Caco-2 (cell line): ENCODE measurements at regions of chr1 and their contacts with region 1.

Region 1: GRCh38 chr1:234963180-234963903 is 165.3 kb downstream of the TOMM20 start:
- DNase-seq: peak; percentile 85 to 88
- H3K4me3 ChIP-seq: peak overlapping the region; percentile 6; the same call in 1 of the 2 replicates
- H3K4me3 Mint-ChIP-seq: peak overlapping the region; percentile 78
- H3K27ac Mint-ChIP-seq: peak overlapping the region; percentile 89
- H3K4me1 ChIP-seq: peaks cover 66% of the 10 kb centered on the region
- H3K4me1 Mint-ChIP-seq: peaks cover 76% of the 10 kb centered on the region
- H3K27me3 ChIP-seq: no peaks in the 10 kb centered on the region
- H3K27me3 Mint-ChIP-seq: no peaks in the 10 kb centered on the region
- CTCF ChIP-seq: no peak

Region 2: GRCh38 chr1:234499119-234499942 is 464.0 kb before region 1 on chr1:
- CTCF ChIA-PET with region 1: no interaction called
- POLR2A ChIA-PET with region 1: no interaction called
- intact Hi-C with region 1: loop called (anchors 1 kb)
- DNase-seq: peak; percentile 81 to 91
- H3K4me3 ChIP-seq: no peak overlapping the region
- H3K4me3 Mint-ChIP-seq: no peak overlapping the region
- H3K27ac Mint-ChIP-seq: peak overlapping the region; percentile 96
- H3K4me1 ChIP-seq: peaks cover 11% of the 10 kb centered on the region
- H3K4me1 Mint-ChIP-seq: peaks cover 18% of the 10 kb centered on the region
- H3K27me3 ChIP-seq: no peaks in the 10 kb centered on the region
- H3K27me3 Mint-ChIP-seq: no peaks in the 10 kb centered on the region
- CTCF ChIP-seq: peak; percentile 96

Region 3: GRCh38 chr1:234722904-234723720 is 240.2 kb before region 1 on chr1:
- CTCF ChIA-PET with region 1: interaction called, 3 read pairs
- POLR2A ChIA-PET with region 1: interaction called, 12 read pairs
- intact Hi-C with region 1: loop called (anchors 1 kb)
- DNase-seq: no peak
- H3K4me3 ChIP-seq: no peak overlapping the region
- H3K4me3 Mint-ChIP-seq: peak overlapping the region; percentile 64
- H3K27ac Mint-ChIP-seq: peak overlapping the region; percentile 86
- H3K4me1 ChIP-seq: peaks cover 93% of the 10 kb centered on the region
- H3K4me1 Mint-ChIP-seq: peaks cover 69% of the 10 kb centered on the region
- H3K27me3 ChIP-seq: no peaks in the 10 kb centered on the region
- H3K27me3 Mint-ChIP-seq: no peaks in the 10 kb centered on the region
- CTCF ChIP-seq: no peak

Region 4: DNA sequence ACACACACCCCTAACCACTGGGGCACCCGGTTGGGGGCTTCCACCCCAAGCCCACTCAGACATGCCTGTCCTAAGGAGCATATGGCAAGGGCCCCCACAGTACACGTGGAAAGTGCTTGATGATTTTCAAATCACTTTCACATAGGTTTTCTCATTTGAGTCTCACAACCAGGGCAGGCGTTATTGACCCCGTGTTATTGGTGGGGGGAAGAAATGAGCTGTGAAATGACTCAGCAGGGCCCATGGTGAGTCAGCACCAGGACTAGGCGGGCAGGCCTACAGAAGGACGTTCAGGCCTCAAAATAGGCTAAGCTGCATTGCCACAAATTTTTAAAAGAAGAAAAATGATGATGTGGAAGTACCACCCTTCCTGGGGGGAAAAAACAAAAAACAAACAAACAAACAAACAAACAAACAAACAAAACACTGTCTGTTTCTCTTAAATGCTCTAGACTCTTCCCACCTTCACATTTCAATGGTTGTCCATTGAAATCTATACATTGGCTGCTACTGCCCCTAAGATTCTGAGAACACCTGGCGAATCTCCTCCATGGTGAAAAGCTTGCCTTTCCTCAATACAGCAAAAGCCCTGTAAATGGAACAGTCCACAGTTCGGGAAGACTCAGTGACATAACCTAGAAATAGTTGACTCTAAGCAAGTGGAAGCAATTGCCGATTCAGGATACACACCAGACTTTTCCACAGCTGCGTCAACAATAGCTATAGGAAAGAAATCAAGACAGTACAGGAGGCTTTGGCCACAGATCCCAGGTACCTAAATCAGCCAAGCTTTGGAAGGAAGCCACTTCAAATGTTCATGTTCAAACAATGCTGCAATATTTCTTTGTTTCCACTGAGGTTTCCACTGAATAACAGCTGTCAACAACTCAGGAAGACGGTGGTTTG is 69.4 kb before region 1 on chr1:
- CTCF ChIA-PET with region 1: no interaction called
- POLR2A ChIA-PET with region 1: no interaction called
- intact Hi-C with region 1: loop called (anchors 5 kb)
- DNase-seq: no peak
- H3K4me3 ChIP-seq: no peak overlapping the region
- H3K4me3 Mint-ChIP-seq: no peak overlapping the region
- H3K27ac Mint-ChIP-seq: no peak overlapping the region
- H3K4me1 ChIP-seq: peaks cover 22% of the 10 kb centered on the region
- H3K4me1 Mint-ChIP-seq: peaks cover 26% of the 10 kb centered on the region
- H3K27me3 ChIP-seq: no peaks in the 10 kb centered on the region
- H3K27me3 Mint-ChIP-seq: no peaks in the 10 kb centered on the region
- CTCF ChIP-seq: no peak

Region 5: DNA sequence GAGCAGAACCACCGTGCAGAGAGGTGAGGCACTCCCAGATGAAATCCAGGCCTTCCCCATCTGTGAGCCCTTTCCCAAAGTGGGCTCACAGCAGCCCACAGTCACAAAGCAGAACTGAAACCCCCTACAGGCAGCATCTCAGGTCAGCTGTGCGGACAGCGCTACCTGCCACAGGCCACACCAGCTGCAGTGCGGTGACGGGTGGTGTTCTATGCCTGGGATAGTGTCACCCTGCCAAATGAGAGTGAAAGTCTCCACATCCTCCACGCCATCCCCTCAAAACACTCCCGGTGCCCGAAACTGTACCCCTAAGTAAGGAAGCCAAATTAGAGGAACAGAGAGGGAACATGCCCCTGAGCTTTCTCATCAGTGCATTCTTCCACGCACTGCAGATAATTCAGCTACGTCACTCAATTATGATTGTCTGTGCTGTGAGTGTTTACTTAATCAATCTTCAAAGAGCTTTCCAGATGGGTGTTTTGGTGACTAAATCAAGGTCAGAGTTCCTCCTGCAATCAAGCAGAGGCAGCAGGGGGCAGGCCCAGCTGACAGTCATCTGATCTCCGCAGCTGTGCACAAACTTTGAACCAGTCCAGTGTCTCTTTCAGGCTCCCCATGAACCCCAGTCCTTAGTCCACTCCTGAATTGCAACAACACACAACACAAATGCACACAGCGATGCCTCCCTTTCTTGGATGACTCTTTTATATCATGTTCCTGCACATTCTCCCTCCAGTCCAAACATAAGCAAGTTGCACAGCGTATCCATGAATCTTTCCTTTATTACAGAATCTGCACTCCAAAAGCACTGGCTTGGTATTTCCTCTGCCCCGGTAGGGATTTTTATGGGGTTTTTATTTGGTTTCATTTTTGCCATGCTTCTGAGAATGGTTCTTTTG is 15.3 kb after region 1 on chr1:
- CTCF ChIA-PET with region 1: interaction called, 3 read pairs
- POLR2A ChIA-PET with region 1: interaction called, 20 read pairs
- intact Hi-C with region 1: loop called (anchors 1 kb)
- DNase-seq: peak; percentile 71 to 74
- H3K4me3 ChIP-seq: no peak overlapping the region
- H3K4me3 Mint-ChIP-seq: no peak overlapping the region
- H3K27ac Mint-ChIP-seq: peak overlapping the region; percentile 94
- H3K4me1 ChIP-seq: peaks cover 74% of the 10 kb centered on the region
- H3K4me1 Mint-ChIP-seq: peaks cover 66% of the 10 kb centered on the region
- H3K27me3 ChIP-seq: no peaks in the 10 kb centered on the region
- H3K27me3 Mint-ChIP-seq: no peaks in the 10 kb centered on the region
- CTCF ChIP-seq: peak; percentile 9 to 20

Region 6: DNA sequence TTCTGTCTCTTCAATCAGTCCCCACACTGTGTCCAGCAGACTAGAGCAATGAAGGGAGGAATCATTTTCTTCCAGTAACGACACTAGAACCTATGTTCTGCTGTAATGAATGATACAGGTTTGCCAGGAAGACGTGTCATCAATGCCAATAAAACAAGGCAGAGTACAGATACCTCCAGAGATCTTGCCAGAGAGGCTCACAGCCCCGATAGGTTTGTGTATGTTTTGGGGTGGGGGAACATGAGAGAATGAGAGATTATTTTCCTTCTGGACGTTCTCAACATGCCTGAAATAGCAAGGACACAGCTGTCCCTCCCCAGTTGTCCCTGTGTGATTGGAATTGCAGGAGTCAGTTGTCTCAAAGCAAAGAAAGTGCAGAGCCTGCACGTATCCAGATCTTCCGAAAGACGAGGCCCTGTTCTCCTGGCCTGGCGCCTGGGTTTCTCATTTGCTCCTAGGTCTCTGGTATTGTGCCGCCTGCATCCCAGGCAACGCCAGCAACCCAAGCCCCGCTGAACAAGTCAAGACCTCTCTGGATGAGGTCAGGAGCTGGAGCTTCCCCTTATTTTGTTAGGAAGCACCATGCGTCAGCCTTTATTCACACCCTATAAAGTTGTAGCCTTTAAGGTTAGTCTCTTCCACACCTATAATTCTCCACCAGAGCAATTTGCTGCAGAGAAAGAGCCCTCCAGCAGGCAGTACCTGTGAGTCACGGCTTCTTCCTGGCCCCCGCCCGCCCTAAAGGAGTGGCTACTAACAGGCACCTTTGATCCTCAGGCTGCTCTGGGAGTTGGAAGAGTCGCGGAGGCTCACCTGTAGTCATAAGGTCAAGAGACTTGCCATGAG is 34.8 kb after region 1 on chr1:
- CTCF ChIA-PET with region 1: no interaction called
- POLR2A ChIA-PET with region 1: no interaction called
- intact Hi-C with region 1: loop called (anchors 1 kb)
- DNase-seq: peak; percentile 81 to 90
- H3K4me3 ChIP-seq: no peak overlapping the region
- H3K4me3 Mint-ChIP-seq: peak overlapping the region; percentile 29
- H3K27ac Mint-ChIP-seq: peak overlapping the region; percentile 88
- H3K4me1 ChIP-seq: peaks cover 25% of the 10 kb centered on the region
- H3K4me1 Mint-ChIP-seq: peaks cover 22% of the 10 kb centered on the region
- H3K27me3 ChIP-seq: no peaks in the 10 kb centered on the region
- H3K27me3 Mint-ChIP-seq: no peaks in the 10 kb centered on the region
- CTCF ChIP-seq: peak in 1 of 2 experiments; percentile 5

Region 7: DNA sequence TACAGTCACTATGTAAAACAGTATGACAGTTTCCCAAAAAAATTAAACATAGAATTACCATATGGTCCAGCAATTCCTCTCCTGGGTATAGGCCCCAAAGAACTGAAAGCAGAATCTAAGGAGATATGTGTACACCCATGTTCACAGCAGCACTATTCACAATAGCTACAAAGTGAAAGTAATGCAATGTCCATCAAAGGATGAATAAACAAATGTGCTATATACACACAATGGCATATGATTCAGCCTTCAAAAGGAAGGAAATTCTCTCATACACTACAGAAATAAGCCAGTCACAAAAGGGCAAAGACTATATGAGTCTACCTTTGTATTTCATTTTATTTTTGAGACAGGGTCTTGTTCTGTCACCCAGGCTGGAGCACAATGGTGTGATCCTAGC is 44.9 kb after region 1 on chr1:
- CTCF ChIA-PET with region 1: no interaction called
- POLR2A ChIA-PET with region 1: no interaction called
- intact Hi-C with region 1: no loop called
- DNase-seq: no peak
- H3K4me3 ChIP-seq: no peak overlapping the region
- H3K4me3 Mint-ChIP-seq: no peak overlapping the region
- H3K27ac Mint-ChIP-seq: no peak overlapping the region
- H3K4me1 ChIP-seq: no peaks in the 10 kb centered on the region
- H3K4me1 Mint-ChIP-seq: no peaks in the 10 kb centered on the region
- H3K27me3 ChIP-seq: no peaks in the 10 kb centered on the region
- H3K27me3 Mint-ChIP-seq: no peaks in the 10 kb centered on the region
- CTCF ChIP-seq: no peak